ENCODE measurements at regions of chr7 and their contacts with region 1.

Region 1: GRCh38 chr7:90067171-90067570 is 87.1 kb upstream of the STEAP1 start:
- DNase-seq: no peak
- ATAC-seq: no peak
- H3K4me3 ChIP-seq: no peak overlapping the region
- H3K4me3 Mint-ChIP-seq: no peak overlapping the region
- H3K27ac ChIP-seq: no peak overlapping the region
- H3K27ac Mint-ChIP-seq: no peak overlapping the region
- H3K4me1 ChIP-seq: no peaks in the 10 kb centered on the region
- H3K4me1 Mint-ChIP-seq: no peaks in the 10 kb centered on the region
- H3K27me3 ChIP-seq: no peaks in the 10 kb centered on the region
- H3K27me3 Mint-ChIP-seq: peaks cover 6 to 12% of the 10 kb centered on the region in 2 donors

Region 2: GRCh38 chr7:90081621-90082020 is 14.4 kb after region 1 on chr7:
- CTCF ChIA-PET with region 1: no interaction called
- POLR2A ChIA-PET with region 1: interaction called in 1 of 2 experiments, 10 read pairs
- DNase-seq: no peak
- ATAC-seq: no peak
- H3K4me3 ChIP-seq: no peak overlapping the region
- H3K4me3 Mint-ChIP-seq: no peak overlapping the region
- H3K27ac ChIP-seq: no peak overlapping the region
- H3K27ac Mint-ChIP-seq: no peak overlapping the region
- H3K4me1 ChIP-seq: no peaks in the 10 kb centered on the region
- H3K4me1 Mint-ChIP-seq: no peaks in the 10 kb centered on the region
- H3K27me3 ChIP-seq: peaks cover 0 to under 1% of the 10 kb centered on the region in 2 experiments
- H3K27me3 Mint-ChIP-seq: peaks cover 9 to 13% of the 10 kb centered on the region in 2 donors

Region 3: DNA sequence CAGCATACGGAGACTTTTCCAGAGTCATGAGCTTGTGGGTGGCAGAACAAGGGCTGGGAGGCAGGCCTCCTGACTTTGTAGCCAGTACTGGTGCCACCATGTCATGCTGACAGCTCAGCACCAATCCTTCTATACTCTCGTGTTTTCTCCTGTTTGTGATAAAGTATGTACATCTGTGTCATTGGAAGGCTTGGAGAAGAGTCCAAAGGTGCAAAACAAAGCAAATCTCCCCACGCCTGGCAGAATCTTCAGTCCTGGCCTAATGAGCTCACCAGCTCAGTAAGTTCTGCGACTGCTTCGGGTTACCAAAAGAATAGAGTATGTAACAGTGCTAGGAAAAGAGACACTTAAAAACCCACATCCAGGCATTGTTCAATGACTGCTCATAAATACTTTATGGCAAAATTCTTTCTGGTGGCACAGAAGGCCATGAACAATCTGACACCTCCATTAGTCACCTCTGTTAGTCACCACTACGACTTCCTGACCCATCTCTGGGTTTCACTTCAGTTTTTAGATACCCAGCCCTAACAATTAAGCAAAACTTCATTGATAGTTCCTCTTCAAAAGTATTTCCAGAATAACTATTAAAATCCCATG is 111.6 kb after region 1 on chr7:
- CTCF ChIA-PET with region 1: no interaction called
- POLR2A ChIA-PET with region 1: no interaction called
- DNase-seq: no peak
- ATAC-seq: no peak
- H3K4me3 ChIP-seq: no peak overlapping the region
- H3K4me3 Mint-ChIP-seq: no peak overlapping the region
- H3K27ac ChIP-seq: no peak overlapping the region
- H3K27ac Mint-ChIP-seq: no peak overlapping the region
- H3K4me1 ChIP-seq: no peaks in the 10 kb centered on the region
- H3K4me1 Mint-ChIP-seq: peaks cover 0 to 5% (median 4%) of the 10 kb centered on the region in 3 donors
- H3K27me3 ChIP-seq: peaks cover 0 to 4% of the 10 kb centered on the region in 2 experiments
- H3K27me3 Mint-ChIP-seq: peaks cover 0 to 5% of the 10 kb centered on the region in 2 donors

Region 4: DNA sequence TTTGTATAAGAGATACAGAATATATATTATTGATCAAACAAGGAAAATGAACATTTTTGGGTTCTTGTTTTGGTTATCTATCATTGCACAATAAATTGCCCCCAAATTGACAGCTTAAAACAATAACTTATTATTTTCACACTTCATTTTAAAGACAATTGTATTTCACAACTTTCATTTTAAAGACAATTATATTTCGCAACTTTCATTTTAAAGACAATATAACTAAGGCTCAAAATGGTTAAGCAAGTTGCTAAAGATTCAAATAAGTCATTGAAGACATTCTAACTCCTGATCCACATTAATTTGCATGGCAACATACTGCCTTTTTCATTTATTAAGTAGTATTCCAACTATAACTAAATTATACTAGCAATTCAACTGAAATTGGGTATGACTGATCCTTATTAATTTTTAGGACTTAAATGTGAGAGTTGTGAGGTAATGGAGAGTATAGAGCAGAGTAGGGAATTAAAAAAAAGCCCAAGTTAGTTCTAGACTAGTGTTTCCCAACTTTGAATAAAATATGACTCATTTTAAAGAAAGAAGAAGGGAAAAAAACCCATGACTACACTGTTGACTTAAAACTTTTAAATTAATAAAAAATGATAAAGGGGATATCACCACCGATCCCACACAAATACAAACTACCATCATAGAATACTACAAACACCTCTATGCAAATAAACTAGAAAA is 134.5 kb after region 1 on chr7:
- CTCF ChIA-PET with region 1: no interaction called
- POLR2A ChIA-PET with region 1: no interaction called
- DNase-seq: no peak
- ATAC-seq: no peak
- H3K4me3 ChIP-seq: no peak overlapping the region
- H3K4me3 Mint-ChIP-seq: no peak overlapping the region
- H3K27ac ChIP-seq: no peak overlapping the region
- H3K27ac Mint-ChIP-seq: no peak overlapping the region
- H3K4me1 ChIP-seq: no peaks in the 10 kb centered on the region
- H3K4me1 Mint-ChIP-seq: no peaks in the 10 kb centered on the region
- H3K27me3 ChIP-seq: no peaks in the 10 kb centered on the region
- H3K27me3 Mint-ChIP-seq: no peaks in the 10 kb centered on the region